CD8-positive, alpha-beta T cell (primary cell): ENCODE measurements at regions of chr6 and their contacts with region 1.

Region 1: GRCh38 chr6:111259089-111259831 is 172.0 kb downstream of the SLC16A10 start:
- DNase-seq: peak; percentile 98 to 100 (median 99)
- ATAC-seq: peak; percentile 96
- H3K4me3 ChIP-seq: peak overlapping the region; percentile 68 to 82
- H3K4me3 Mint-ChIP-seq: peak overlapping the region; percentile 86
- H3K27ac ChIP-seq: peak overlapping the region; percentile 90
- H3K27ac Mint-ChIP-seq: peak overlapping the region; percentile 90
- H3K4me1 ChIP-seq: peaks cover 18% of the 10 kb centered on the region
- H3K4me1 Mint-ChIP-seq: peaks cover 28% of the 10 kb centered on the region
- H3K27me3 ChIP-seq: no peaks in the 10 kb centered on the region
- H3K27me3 Mint-ChIP-seq: no peaks in the 10 kb centered on the region
- CTCF ChIP-seq: peak; percentile 80

Region 2: GRCh38 chr6:110815217-110816109 is 443.8 kb before region 1 on chr6 and contains the start of gene CDK19:
- CTCF ChIA-PET with region 1: no interaction called
- POLR2A ChIA-PET with region 1: no interaction called
- intact Hi-C with region 1: loop called in 1 of 2 experiments (anchors 10 kb)
- DNase-seq: peak; percentile 96 to 99 (median 98)
- ATAC-seq: peak; percentile 81
- H3K4me3 ChIP-seq: peak within 1 kb of the TSS; percentile 83 to 89
- H3K4me3 Mint-ChIP-seq: peak within 1 kb of the TSS; percentile 98
- H3K27ac ChIP-seq: peak within 1 kb of the TSS; percentile 88 to 95
- H3K27ac Mint-ChIP-seq: peak within 1 kb of the TSS; percentile 99
- H3K4me1 ChIP-seq: peaks cover 12% of the 10 kb centered on the region
- H3K4me1 Mint-ChIP-seq: peaks cover 23% of the 10 kb centered on the region
- H3K27me3 ChIP-seq: no peaks in the 10 kb centered on the region
- H3K27me3 Mint-ChIP-seq: no peaks in the 10 kb centered on the region
- CTCF ChIP-seq: no peak
- total RNA-seq, gene CDK19: 4.9 to 5.0 TPM

Region 3: DNA sequence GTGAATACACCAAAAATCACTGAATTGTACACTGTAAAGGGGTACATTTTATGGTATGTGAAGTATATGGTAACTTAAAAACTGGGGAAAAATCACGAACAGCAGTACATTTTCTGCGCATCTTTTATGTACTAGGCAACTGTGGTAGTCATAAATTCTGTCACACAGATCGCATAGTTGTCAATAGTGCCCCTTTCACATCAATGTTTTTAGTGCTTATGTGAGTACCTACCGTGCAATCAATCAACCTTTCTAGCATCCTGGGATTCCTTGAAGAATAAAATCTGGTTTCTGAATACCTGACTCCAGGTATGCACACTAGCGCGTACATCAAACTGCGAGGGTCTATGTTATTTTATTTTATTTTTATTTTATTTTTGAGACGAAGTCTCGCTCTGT is 278.1 kb before region 1 on chr6:
- CTCF ChIA-PET with region 1: no interaction called
- POLR2A ChIA-PET with region 1: no interaction called
- intact Hi-C with region 1: loop called (anchors 1 to 5 kb)
- DNase-seq: peak in 1 of 9 experiments; percentile 49
- ATAC-seq: peak; percentile 1
- H3K4me3 ChIP-seq: peak overlapping the region; percentile 85 to 95
- H3K4me3 Mint-ChIP-seq: peak overlapping the region; percentile 99
- H3K27ac ChIP-seq: peak overlapping the region; percentile 90 to 97
- H3K27ac Mint-ChIP-seq: peak overlapping the region; percentile 100
- H3K4me1 ChIP-seq: peaks cover 6% of the 10 kb centered on the region
- H3K4me1 Mint-ChIP-seq: peaks cover 45% of the 10 kb centered on the region
- H3K27me3 ChIP-seq: no peaks in the 10 kb centered on the region
- H3K27me3 Mint-ChIP-seq: no peaks in the 10 kb centered on the region
- CTCF ChIP-seq: no peak

Region 4: DNA sequence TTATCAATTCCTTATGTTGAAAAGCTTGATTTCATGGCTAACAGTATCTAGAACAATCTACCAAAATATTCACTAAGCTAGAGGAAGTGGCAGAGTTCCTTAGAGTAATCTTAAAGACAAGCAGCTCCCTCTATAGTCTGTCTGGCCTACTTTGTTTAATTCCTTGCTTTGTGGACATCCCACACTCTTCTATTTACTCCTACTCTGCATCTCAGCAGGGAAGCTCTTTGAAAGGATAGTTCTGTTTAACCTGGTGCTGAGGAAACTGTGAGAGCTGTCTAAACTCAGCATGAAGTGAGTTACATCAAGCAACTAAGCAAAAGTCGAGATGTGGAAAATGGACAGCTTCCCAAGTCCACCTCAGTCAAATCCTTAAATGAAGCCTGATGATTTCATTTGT is 219.5 kb after region 1 on chr6:
- CTCF ChIA-PET with region 1: interaction called, 37 read pairs
- POLR2A ChIA-PET with region 1: interaction called, 37 read pairs
- intact Hi-C with region 1: loop called (anchors 1 kb)
- DNase-seq: peak in 2 of 9 experiments; percentile 54 to 70
- ATAC-seq: no peak
- H3K4me3 ChIP-seq: no peak overlapping the region
- H3K4me3 Mint-ChIP-seq: no peak overlapping the region
- H3K27ac ChIP-seq: no peak overlapping the region
- H3K27ac Mint-ChIP-seq: peak overlapping the region; percentile 47
- H3K4me1 ChIP-seq: peaks cover 14% of the 10 kb centered on the region
- H3K4me1 Mint-ChIP-seq: peaks cover 44% of the 10 kb centered on the region
- H3K27me3 ChIP-seq: no peaks in the 10 kb centered on the region
- H3K27me3 Mint-ChIP-seq: no peaks in the 10 kb centered on the region
- CTCF ChIP-seq: peak; percentile 49

Region 5: GRCh38 chr6:111605100-111605751 is 346.0 kb after region 1 on chr6:
- CTCF ChIA-PET with region 1: no interaction called
- POLR2A ChIA-PET with region 1: interaction called, 8 read pairs
- intact Hi-C with region 1: loop called in 1 of 2 experiments (anchors 1 kb)
- DNase-seq: peak in 6 of 9 experiments; percentile 9 to 51 (median 21)
- ATAC-seq: peak; percentile 58
- H3K4me3 ChIP-seq: peak overlapping the region; percentile 51 to 63
- H3K4me3 Mint-ChIP-seq: peak overlapping the region; percentile 95
- H3K27ac ChIP-seq: peak overlapping the region; percentile 76 to 80
- H3K27ac Mint-ChIP-seq: peak overlapping the region; percentile 95
- H3K4me1 ChIP-seq: peaks cover 22% of the 10 kb centered on the region
- H3K4me1 Mint-ChIP-seq: peaks cover 60% of the 10 kb centered on the region
- H3K27me3 ChIP-seq: no peaks in the 10 kb centered on the region
- H3K27me3 Mint-ChIP-seq: no peaks in the 10 kb centered on the region
- CTCF ChIP-seq: no peak

Region 6: GRCh38 chr6:111873178-111874024 is 614.1 kb after region 1 on chr6 and contains the start of gene FYN:
- CTCF ChIA-PET with region 1: no interaction called
- POLR2A ChIA-PET with region 1: no interaction called
- intact Hi-C with region 1: loop called in 1 of 2 experiments (anchors 5 kb)
- DNase-seq: peak; percentile 97 to 99 (median 98)
- ATAC-seq: peak; percentile 87
- H3K4me3 ChIP-seq: peak within 1 kb of the TSS; percentile 91 to 94
- H3K4me3 Mint-ChIP-seq: peak within 1 kb of the TSS; percentile 97
- H3K27ac ChIP-seq: peak within 1 kb of the TSS; percentile 86 to 91
- H3K27ac Mint-ChIP-seq: peak within 1 kb of the TSS; percentile 98
- H3K4me1 ChIP-seq: peaks cover 35% of the 10 kb centered on the region
- H3K4me1 Mint-ChIP-seq: peaks cover 41% of the 10 kb centered on the region
- H3K27me3 ChIP-seq: no peaks in the 10 kb centered on the region
- H3K27me3 Mint-ChIP-seq: no peaks in the 10 kb centered on the region
- CTCF ChIP-seq: peak; percentile 42
- total RNA-seq, gene FYN: 479 to 483 TPM

Region 7: DNA sequence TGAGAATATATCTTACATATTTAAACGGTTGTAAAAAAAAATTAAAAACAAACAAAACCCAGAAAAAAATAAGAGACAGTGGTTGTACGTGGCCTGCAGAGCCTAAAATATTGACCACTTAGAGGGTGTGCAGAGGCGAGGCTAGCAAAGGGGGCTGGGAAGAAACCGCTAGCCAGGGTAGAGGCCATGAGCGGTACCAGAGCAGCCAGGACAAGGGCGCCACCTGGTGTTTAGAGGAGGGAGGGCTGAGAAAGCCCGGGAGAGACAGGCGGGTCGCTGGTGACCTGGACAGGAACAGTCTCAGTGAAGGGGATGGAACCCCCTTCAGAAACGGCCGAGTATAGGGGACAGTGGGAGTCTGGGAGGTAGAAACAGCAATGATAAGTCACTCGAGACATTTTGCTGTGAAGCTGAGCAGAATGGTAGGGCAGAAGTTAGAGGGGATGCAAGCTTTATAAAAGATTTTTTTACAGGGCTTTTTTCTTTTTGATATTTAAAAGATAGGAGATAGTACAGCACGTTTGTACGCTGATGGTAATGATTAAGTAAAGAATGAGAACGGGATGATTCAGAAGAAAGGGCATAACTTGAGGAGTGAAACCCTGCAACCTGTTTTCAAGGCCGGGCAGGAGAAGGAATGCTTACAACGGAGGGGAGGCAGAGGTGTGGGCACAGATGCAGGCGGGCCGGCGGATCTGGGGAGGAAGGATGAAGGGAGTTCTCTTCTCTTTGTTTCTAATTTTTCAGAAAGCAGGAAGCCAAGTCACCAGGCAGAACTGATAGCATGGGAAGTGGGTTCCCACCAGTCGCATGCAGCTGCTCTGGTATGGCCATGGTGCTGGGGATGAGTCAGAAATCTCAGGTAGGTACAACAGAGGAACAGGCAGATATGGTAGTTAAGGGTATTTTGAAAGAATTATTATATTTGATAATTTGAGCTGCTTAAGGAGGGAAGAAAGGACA is 904.3 kb after region 1 on chr6:
- CTCF ChIA-PET with region 1: interaction called, 6 read pairs
- POLR2A ChIA-PET with region 1: interaction called, 4 read pairs
- intact Hi-C with region 1: loop called in 1 of 2 experiments (anchors 5 kb)
- DNase-seq: peak; percentile 52 to 83 (median 75)
- ATAC-seq: peak; percentile 96
- H3K4me3 ChIP-seq: no peak overlapping the region
- H3K4me3 Mint-ChIP-seq: peak overlapping the region; percentile 57
- H3K27ac ChIP-seq: no peak overlapping the region
- H3K27ac Mint-ChIP-seq: no peak overlapping the region
- H3K4me1 ChIP-seq: peaks cover 15% of the 10 kb centered on the region
- H3K4me1 Mint-ChIP-seq: peaks cover 14% of the 10 kb centered on the region
- H3K27me3 ChIP-seq: peaks cover 0 to 5% of the 10 kb centered on the region in 2 experiments
- H3K27me3 Mint-ChIP-seq: peaks cover 33% of the 10 kb centered on the region
- CTCF ChIP-seq: peak; percentile 87